Activated naive CD4-positive, alpha-beta T cell treated with anti-CD3 and anti-CD28 coated beads for 36 hours (primary cell): ENCODE measurements at regions of chr22 and their contacts with region 1.

Region 1: DNA sequence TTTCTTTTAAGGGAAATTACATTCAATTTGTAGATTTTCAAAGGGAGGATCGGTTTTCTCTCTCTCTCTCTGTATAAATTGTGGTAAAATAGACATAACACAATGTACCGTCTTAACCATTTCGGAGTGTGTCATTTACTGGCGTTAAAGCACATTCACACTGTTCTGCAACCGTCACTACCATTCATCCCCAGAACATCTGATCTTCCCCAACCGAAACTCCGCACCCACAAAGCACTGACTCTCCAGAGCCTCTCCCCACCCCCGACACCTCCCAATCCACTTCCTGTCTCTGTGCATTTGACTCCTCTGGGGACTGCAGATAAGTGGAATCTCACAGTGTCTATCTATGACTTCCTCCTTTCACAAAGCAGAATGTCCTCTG is 15.9 kb upstream of the GRAMD4 start:
- DNase-seq: peak; percentile 94
- H3K4me3 Mint-ChIP-seq: peak overlapping the region; percentile 67
- H3K27ac Mint-ChIP-seq: peak overlapping the region; percentile 95
- H3K4me1 Mint-ChIP-seq: peaks cover 15% of the 10 kb centered on the region
- H3K27me3 Mint-ChIP-seq: no peaks in the 10 kb centered on the region

Region 2: DNA sequence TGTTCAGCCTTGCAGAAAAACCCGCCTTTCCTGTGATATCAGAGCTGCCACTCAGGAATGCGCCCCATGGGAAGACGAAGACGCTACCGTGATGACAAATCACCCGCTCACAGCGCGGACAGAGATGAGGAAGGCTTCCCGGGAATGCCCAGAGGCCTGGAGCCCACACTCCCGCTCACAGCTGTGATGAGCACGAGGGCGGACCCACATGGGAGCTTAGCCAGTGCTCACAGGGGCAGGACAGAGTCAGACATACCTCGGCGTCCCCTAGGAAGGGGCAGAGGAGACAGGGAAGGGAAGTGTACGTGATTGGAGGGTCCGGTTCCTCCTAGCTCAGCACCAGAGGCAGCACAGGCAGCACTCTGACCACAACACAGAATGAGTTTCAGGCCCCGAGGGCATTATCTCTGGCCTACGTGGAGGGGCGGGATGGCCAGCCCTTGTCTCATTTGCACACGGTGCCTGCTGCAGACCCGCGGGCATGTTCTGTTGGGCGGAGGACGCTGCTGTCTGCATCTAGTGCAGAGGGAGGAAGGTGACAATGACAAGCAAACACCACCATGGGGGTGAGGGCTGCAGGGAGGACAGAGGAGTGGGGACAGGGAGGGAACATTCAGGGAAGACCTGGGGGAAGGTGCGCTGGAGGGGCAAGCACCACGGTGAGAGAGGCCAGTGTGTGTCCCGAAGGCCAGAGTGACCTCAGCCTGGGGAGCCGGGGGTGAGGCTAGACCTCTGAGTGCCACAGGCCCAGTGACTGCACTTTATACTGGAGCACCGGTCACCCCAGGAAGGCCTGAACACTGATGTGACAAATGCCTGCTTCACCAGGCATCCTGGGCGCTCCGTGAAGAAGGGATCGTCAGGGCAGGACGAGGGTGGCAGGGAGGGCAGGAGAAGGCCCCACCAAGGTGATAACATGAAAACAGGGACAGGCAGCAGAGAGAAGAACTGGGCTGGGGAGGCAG is 146.5 kb before region 1 on chr22:
- CTCF ChIA-PET with region 1: no interaction called
- intact Hi-C with region 1: no loop called
- DNase-seq: no peak
- H3K4me3 Mint-ChIP-seq: no peak overlapping the region
- H3K27ac Mint-ChIP-seq: no peak overlapping the region
- H3K4me1 Mint-ChIP-seq: no peaks in the 10 kb centered on the region
- H3K27me3 Mint-ChIP-seq: no peaks in the 10 kb centered on the region

Region 3: GRCh38 chr22:46576556-46577367 is 27.5 kb before region 1 on chr22:
- CTCF ChIA-PET with region 1: no interaction called
- intact Hi-C with region 1: loop called (anchors 2 kb)
- DNase-seq: peak; percentile 28
- H3K4me3 Mint-ChIP-seq: peak overlapping the region; percentile 76
- H3K27ac Mint-ChIP-seq: no peak overlapping the region
- H3K4me1 Mint-ChIP-seq: peaks cover 24% of the 10 kb centered on the region
- H3K27me3 Mint-ChIP-seq: no peaks in the 10 kb centered on the region

Region 4: GRCh38 chr22:46592390-46592872 is 11.9 kb before region 1 on chr22:
- CTCF ChIA-PET with region 1: no interaction called
- intact Hi-C with region 1: loop called (anchors 1 kb)
- DNase-seq: peak; percentile 72
- H3K4me3 Mint-ChIP-seq: peak overlapping the region; percentile 36
- H3K27ac Mint-ChIP-seq: peak overlapping the region; percentile 46
- H3K4me1 Mint-ChIP-seq: peaks cover 24% of the 10 kb centered on the region
- H3K27me3 Mint-ChIP-seq: no peaks in the 10 kb centered on the region

Region 5: DNA sequence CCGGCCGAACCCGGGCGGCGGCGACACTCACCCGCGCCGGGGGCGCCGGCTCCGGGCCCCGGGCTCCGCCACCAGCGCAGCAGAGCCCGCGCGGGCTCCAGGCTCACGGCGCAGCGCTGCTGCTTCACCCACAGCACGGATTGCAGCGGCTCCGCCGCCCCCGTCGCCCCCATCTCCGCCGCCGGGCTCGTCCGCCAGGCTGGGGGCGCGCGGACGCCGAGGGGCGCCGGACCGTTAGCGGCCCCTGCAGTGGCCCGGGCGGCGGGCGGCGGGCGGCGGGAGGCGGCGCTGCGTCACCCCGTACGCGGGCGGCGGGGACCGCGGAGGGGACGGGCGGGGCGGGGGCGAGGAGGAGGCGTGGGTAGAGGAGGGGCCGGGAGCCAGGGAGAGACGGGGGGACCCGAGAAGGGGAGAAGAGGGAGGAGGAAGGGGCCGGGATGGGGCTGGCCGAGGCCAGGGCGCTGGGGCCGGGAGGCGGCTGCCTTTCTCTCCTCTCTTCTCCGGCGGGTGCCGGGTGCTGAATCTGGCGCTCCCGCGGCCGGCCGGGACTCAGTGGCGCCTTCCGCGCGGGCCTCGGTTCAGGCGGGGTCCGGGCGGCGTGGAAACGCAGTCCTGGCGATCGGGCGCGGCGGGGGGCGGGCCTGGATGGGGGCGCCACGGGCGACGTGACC is 133.8 kb after region 1 on chr22 and contains the start of gene CERK:
- CTCF ChIA-PET with region 1: no interaction called
- intact Hi-C with region 1: no loop called
- DNase-seq: peak; percentile 72
- H3K4me3 Mint-ChIP-seq: peak within 1 kb of the TSS; percentile 100
- H3K27ac Mint-ChIP-seq: peak within 1 kb of the TSS; percentile 99
- H3K4me1 Mint-ChIP-seq: peaks cover 40% of the 10 kb centered on the region
- H3K27me3 Mint-ChIP-seq: no peaks in the 10 kb centered on the region
- total RNA-seq, gene CERK: 32.6 to 34.9 TPM